Dendritic cell treated with granulocyte-macrophage colony-stimulating factor and Interleukin-4, amounts not matched to agents 40 ng/mL and 50 ng/mL, for 4 days (primary cell): ENCODE measurements at regions of chr12 and their contacts with region 1.

Region 1: GRCh38 chr12:125402874-125403789 is 337.9 kb downstream of the AACS start:
- H3K4me3 Mint-ChIP-seq: no peak overlapping the region
- H3K27ac Mint-ChIP-seq: no peak overlapping the region
- H3K4me1 Mint-ChIP-seq: no peaks in the 10 kb centered on the region
- H3K27me3 Mint-ChIP-seq: no peaks in the 10 kb centered on the region

Region 2: GRCh38 chr12:125330645-125331341 is 72.3 kb before region 1 on chr12:
- intact Hi-C with region 1: loop called (anchors 5 kb)
- H3K4me3 Mint-ChIP-seq: no peak overlapping the region
- H3K27ac Mint-ChIP-seq: no peak overlapping the region
- H3K4me1 Mint-ChIP-seq: no peaks in the 10 kb centered on the region
- H3K27me3 Mint-ChIP-seq: peaks cover 42% of the 10 kb centered on the region